ENCODE measurements at regions of chr6 and their contacts with region 1.

Region 1: DNA sequence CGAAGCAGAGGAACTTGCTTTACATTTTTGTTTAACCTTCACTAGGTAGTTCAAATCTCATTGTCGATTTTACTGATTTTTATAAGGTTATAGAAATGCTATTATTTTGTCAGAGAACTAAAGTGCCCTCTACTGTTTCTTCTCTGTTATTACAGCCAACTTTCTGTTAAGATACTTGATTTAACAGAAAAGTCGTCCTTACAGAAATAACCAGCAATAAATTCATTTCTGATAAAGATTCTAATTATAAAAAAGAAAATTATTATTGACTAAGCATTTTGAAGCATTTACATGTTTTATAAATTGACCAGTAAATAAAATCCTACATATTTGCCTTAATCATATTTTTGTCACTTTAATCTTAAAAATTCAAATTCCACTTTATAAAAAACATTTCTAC is 60.8 kb downstream of the OGFRL1 start:
- DNase-seq: peak in 3 of 14 experiments; percentile 35 to 44 (median 41)
- ATAC-seq: no peak
- H3K4me3 ChIP-seq: no peak overlapping the region
- H3K4me3 Mint-ChIP-seq: no peak overlapping the region
- H3K27ac ChIP-seq: no peak overlapping the region
- H3K27ac Mint-ChIP-seq: no peak overlapping the region
- H3K4me1 ChIP-seq: no peaks in the 10 kb centered on the region
- H3K4me1 Mint-ChIP-seq: no peaks in the 10 kb centered on the region
- H3K27me3 ChIP-seq: no peaks in the 10 kb centered on the region
- H3K27me3 Mint-ChIP-seq: peaks cover 4% of the 10 kb centered on the region
- CTCF ChIP-seq: peak; percentile 73

Region 2: DNA sequence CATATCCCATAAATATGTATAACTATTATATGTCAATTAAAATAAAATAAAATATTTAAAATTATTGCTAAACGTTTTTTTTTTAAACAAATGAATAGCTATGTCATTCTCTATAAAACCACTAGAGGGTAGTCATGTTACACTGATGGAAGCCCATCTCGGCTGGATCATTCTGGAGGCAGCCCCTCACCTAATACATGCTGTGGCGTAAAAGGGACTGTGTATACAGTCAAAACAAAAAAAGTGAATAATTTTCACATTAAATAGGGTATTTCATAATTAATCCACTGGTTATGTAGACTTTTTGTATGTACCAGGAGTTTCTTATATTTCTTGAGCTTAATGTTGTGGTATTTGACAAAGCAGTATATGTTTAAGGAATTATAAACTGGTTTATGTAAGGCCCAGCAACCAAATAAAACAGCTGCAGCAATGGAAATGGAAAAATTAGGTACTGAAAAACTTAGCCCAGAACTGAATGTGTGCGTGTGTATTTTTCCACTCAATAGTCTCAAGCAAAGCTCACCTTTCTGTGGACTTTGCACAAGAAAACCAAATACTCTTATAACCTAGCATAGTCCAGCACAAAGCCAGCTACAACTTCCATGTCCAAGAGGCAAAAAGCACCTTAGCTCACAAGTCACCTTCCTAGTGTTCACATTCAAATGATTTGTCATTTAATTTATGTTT is 1128.2 kb before region 1 on chr6:
- CTCF ChIA-PET with region 1: no interaction called
- POLR2A ChIA-PET with region 1: no interaction called
- intact Hi-C with region 1: loop called in 1 of 2 experiments (anchors 10 kb)
- DNase-seq: peak in 4 of 14 experiments; percentile 5 to 29 (median 20)
- ATAC-seq: no peak
- H3K4me3 ChIP-seq: no peak overlapping the region
- H3K4me3 Mint-ChIP-seq: no peak overlapping the region
- H3K27ac ChIP-seq: no peak overlapping the region
- H3K27ac Mint-ChIP-seq: no peak overlapping the region
- H3K4me1 ChIP-seq: no peaks in the 10 kb centered on the region
- H3K4me1 Mint-ChIP-seq: no peaks in the 10 kb centered on the region
- H3K27me3 ChIP-seq: no peaks in the 10 kb centered on the region
- H3K27me3 Mint-ChIP-seq: peaks cover 18% of the 10 kb centered on the region
- CTCF ChIP-seq: peak; percentile 68

Region 3: DNA sequence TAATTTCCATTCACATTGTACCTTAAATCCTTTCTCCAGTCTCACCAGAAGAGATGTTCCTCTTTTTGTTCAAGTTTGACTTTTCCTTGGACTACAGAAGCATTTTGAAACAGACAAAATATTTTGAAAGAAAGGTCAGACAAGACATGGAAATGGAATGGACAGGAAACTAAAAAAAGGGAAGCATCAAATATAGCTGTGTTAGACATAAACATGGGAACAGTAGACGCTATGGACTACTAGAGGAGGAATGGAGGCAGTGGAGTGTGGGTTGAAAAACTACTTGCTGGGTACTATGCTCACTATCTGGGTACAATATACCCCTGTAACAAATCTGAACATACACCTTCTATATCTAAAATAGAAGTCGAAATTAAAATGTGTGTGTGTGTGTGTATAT is 940.2 kb before region 1 on chr6:
- CTCF ChIA-PET with region 1: no interaction called
- POLR2A ChIA-PET with region 1: no interaction called
- intact Hi-C with region 1: no loop called
- DNase-seq: no peak
- ATAC-seq: no peak
- H3K4me3 ChIP-seq: no peak overlapping the region
- H3K4me3 Mint-ChIP-seq: no peak overlapping the region
- H3K27ac ChIP-seq: no peak overlapping the region
- H3K27ac Mint-ChIP-seq: no peak overlapping the region
- H3K4me1 ChIP-seq: peaks cover 9% of the 10 kb centered on the region
- H3K4me1 Mint-ChIP-seq: peaks cover 11% of the 10 kb centered on the region
- H3K27me3 ChIP-seq: peaks cover 0 to 2% of the 10 kb centered on the region in 2 experiments
- H3K27me3 Mint-ChIP-seq: peaks cover 5% of the 10 kb centered on the region
- CTCF ChIP-seq: no peak

Region 4: GRCh38 chr6:70706491-70707123 is 642.8 kb before region 1 on chr6:
- CTCF ChIA-PET with region 1: no interaction called
- POLR2A ChIA-PET with region 1: no interaction called
- intact Hi-C with region 1: loop called in 1 of 2 experiments (anchors 5 kb)
- DNase-seq: peak in 4 of 14 experiments; percentile 30 to 74 (median 56)
- ATAC-seq: no peak
- H3K4me3 ChIP-seq: no peak overlapping the region
- H3K4me3 Mint-ChIP-seq: no peak overlapping the region
- H3K27ac ChIP-seq: no peak overlapping the region
- H3K27ac Mint-ChIP-seq: peak overlapping the region; percentile 8
- H3K4me1 ChIP-seq: no peaks in the 10 kb centered on the region
- H3K4me1 Mint-ChIP-seq: peaks cover 66% of the 10 kb centered on the region
- H3K27me3 ChIP-seq: no peaks in the 10 kb centered on the region
- H3K27me3 Mint-ChIP-seq: no peaks in the 10 kb centered on the region
- CTCF ChIP-seq: peak; percentile 82

Region 5: GRCh38 chr6:71190809-71191208 is 158.6 kb before region 1 on chr6:
- CTCF ChIA-PET with region 1: interaction called, 3 read pairs
- POLR2A ChIA-PET with region 1: no interaction called
- intact Hi-C with region 1: loop called (anchors 1 kb)
- DNase-seq: peak in 3 of 14 experiments; percentile 37 to 40 (median 40)
- ATAC-seq: no peak
- H3K4me3 ChIP-seq: no peak overlapping the region
- H3K4me3 Mint-ChIP-seq: no peak overlapping the region
- H3K27ac ChIP-seq: no peak overlapping the region
- H3K27ac Mint-ChIP-seq: no peak overlapping the region
- H3K4me1 ChIP-seq: no peaks in the 10 kb centered on the region
- H3K4me1 Mint-ChIP-seq: no peaks in the 10 kb centered on the region
- H3K27me3 ChIP-seq: no peaks in the 10 kb centered on the region
- H3K27me3 Mint-ChIP-seq: peaks cover 13% of the 10 kb centered on the region
- CTCF ChIP-seq: peak; percentile 51

Measured in CD4-positive, alpha-beta T cell (primary cell).